ENCODE measurements at regions of chr3 and their contacts with region 1.

Region 1: DNA sequence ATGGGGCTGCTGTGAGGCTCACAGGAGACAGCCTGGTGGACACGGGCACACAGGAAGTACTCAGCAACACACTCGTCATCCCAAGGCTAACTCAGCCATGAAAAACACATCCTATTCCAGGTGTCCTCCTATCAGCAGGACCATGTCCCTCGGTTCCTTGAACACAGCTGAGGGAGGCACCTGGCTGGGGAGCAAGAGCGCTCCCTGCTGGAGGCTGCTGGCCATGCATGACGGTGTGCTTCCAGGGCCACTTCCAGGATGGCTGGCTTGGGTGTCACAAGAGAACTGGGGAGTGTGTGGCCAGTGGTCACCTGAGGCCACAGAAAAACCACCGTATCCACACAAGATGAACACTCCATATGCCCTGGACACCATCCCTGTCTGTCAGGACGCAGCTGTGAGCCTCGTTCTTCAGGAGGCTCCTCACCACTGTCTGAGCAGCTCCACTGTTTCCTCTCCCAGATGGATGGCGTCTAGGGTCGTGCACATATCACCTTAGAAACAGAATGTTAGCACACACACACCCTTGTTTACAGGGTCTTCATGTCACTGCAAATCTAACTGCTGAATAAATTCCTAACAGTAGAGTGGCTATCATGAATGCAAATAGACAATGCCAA is 31.0 kb downstream of the POC1A start:
- DNase-seq: peak; percentile 66 to 79 (median 70)
- H3K4me3 ChIP-seq: no peak overlapping the region
- H3K4me3 Mint-ChIP-seq: no peak overlapping the region
- H3K27ac ChIP-seq: no peak overlapping the region
- H3K27ac Mint-ChIP-seq: no peak overlapping the region
- H3K4me1 ChIP-seq: no peaks in the 10 kb centered on the region
- H3K4me1 Mint-ChIP-seq: no peaks in the 10 kb centered on the region
- H3K27me3 ChIP-seq: no peaks in the 10 kb centered on the region
- H3K27me3 Mint-ChIP-seq: no peaks in the 10 kb centered on the region

Region 2: GRCh38 chr3:52001443-52001974 is 121.7 kb before region 1 on chr3:
- CTCF ChIA-PET with region 1: interaction called, 132 read pairs
- POLR2A ChIA-PET with region 1: interaction called, 10 read pairs
- intact Hi-C with region 1: loop called (anchors 1 kb)
- DNase-seq: peak; percentile 81 to 86 (median 84)
- H3K4me3 ChIP-seq: no peak overlapping the region
- H3K4me3 Mint-ChIP-seq: peak overlapping the region in 5 of 8 donors; percentile 4 to 26 (median 8)
- H3K27ac ChIP-seq: no peak overlapping the region
- H3K27ac Mint-ChIP-seq: peak overlapping the region in 4 of 7 donors; percentile 46 to 80 (median 60)
- H3K4me1 ChIP-seq: peaks cover 21% of the 10 kb centered on the region
- H3K4me1 Mint-ChIP-seq: peaks cover 3 to 22% (median 12%) of the 10 kb centered on the region in 4 donors
- H3K27me3 ChIP-seq: no peaks in the 10 kb centered on the region
- H3K27me3 Mint-ChIP-seq: no peaks in the 10 kb centered on the region

Region 3: DNA sequence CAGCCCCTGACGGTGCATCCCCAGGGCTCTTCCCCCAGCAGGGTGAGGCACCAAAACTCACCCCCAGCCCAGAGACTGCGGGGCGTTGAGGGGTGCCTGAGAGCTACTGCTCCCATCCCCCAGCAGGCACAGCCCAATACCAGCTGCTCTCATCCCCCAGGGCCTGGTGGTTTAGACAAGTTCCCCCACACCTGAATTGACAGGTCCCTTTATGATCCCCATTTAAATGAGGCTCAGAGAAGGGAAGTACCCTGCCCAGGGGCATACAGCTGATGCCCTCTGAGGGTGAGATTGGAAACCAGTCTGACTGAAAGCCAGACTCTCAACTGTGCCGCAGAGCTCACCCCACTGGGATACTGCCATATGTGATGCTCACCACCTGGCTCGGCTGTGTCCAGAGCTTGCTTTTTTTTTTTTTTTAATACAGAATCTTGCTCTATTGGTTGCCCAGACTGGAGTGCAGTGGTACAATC is 87.0 kb before region 1 on chr3:
- CTCF ChIA-PET with region 1: interaction called, 31 read pairs
- POLR2A ChIA-PET with region 1: no interaction called
- intact Hi-C with region 1: loop called (anchors 1 kb)
- DNase-seq: no peak
- H3K4me3 ChIP-seq: no peak overlapping the region
- H3K4me3 Mint-ChIP-seq: no peak overlapping the region
- H3K27ac ChIP-seq: no peak overlapping the region
- H3K27ac Mint-ChIP-seq: peak overlapping the region in 1 of 7 donors; percentile 30
- H3K4me1 ChIP-seq: no peaks in the 10 kb centered on the region
- H3K4me1 Mint-ChIP-seq: peaks cover 0 to 6% (median 0%) of the 10 kb centered on the region in 4 donors
- H3K27me3 ChIP-seq: no peaks in the 10 kb centered on the region
- H3K27me3 Mint-ChIP-seq: no peaks in the 10 kb centered on the region

Region 4: DNA sequence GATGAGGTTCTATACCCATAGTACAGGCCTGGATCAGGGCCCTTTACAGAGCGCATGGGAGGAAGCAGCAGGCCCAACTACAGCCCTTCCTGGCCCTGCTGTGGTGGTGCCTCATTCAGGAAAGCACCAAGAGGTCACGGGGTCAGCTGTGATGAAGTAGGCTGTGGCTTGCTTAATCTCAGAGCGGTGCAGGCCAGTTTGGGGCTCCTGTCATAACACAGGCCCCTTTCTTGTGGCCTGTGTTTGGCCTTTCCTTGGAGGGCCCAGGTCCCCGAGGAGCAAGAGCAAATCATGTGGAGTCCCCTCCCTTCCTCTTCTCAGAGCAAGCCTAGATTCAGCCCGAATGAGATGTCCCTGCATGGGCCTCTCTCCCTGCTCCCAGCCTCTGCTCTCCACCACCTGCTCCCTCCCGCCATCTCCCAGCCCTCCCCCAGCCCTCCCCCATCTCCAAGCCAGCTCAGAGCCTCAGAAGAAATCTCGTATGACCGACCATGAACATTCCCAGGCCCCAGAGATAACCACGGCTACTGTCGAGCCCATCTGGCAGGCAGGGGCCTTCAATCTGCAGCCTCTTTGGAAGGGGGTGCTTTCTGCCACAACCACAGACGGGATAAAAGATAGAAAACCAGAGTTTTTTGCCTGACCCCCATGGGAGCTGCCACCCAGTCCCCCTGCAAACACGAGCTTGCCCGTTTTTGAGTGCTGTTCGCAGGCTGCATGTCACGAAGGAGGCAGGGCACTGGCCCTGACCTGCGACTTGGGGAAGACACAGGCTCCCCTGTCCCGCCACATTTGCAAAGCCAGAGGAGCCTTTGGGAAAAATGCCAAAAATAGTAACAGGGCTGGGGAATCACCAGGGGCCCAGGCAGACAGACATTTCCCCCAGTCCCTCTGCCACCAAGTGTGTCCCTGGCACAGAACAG is 34.5 kb before region 1 on chr3:
- CTCF ChIA-PET with region 1: no interaction called
- POLR2A ChIA-PET with region 1: no interaction called
- intact Hi-C with region 1: loop called (anchors 1 kb)
- DNase-seq: no peak
- H3K4me3 ChIP-seq: no peak overlapping the region
- H3K4me3 Mint-ChIP-seq: no peak overlapping the region
- H3K27ac ChIP-seq: no peak overlapping the region
- H3K27ac Mint-ChIP-seq: no peak overlapping the region
- H3K4me1 ChIP-seq: peaks cover 12% of the 10 kb centered on the region
- H3K4me1 Mint-ChIP-seq: peaks cover 7 to 28% (median 14%) of the 10 kb centered on the region in 4 donors
- H3K27me3 ChIP-seq: no peaks in the 10 kb centered on the region
- H3K27me3 Mint-ChIP-seq: no peaks in the 10 kb centered on the region

Region 5: GRCh38 chr3:52144034-52144795 is 21.0 kb after region 1 on chr3:
- CTCF ChIA-PET with region 1: interaction called, 6 read pairs
- POLR2A ChIA-PET with region 1: no interaction called
- intact Hi-C with region 1: loop called (anchors 1 kb)
- DNase-seq: peak; percentile 80 to 91 (median 82)
- H3K4me3 ChIP-seq: no peak overlapping the region
- H3K4me3 Mint-ChIP-seq: no peak overlapping the region
- H3K27ac ChIP-seq: no peak overlapping the region
- H3K27ac Mint-ChIP-seq: peak overlapping the region in 6 of 7 donors; percentile 32 to 82 (median 60)
- H3K4me1 ChIP-seq: peaks cover 6% of the 10 kb centered on the region
- H3K4me1 Mint-ChIP-seq: peaks cover 6 to 11% (median 9%) of the 10 kb centered on the region in 4 donors
- H3K27me3 ChIP-seq: no peaks in the 10 kb centered on the region
- H3K27me3 Mint-ChIP-seq: no peaks in the 10 kb centered on the region